ENCODE measurements at regions of chr17 and their contacts with region 1.

Region 1: GRCh38 chr17:47970704-47971463 is at the start of gene CDK5RAP3:
- DNase-seq: peak; percentile 97 to 99 (median 99)
- ATAC-seq: peak; percentile 98
- H3K4me3 ChIP-seq: peak within 1 kb of the TSS; percentile 77 to 99
- H3K4me3 Mint-ChIP-seq: peak within 1 kb of the TSS; percentile 98
- H3K27ac ChIP-seq: peak within 1 kb of the TSS; percentile 40 to 84
- H3K27ac Mint-ChIP-seq: peak within 1 kb of the TSS; percentile 89
- H3K4me1 ChIP-seq: peaks cover 19% of the 10 kb centered on the region
- H3K4me1 Mint-ChIP-seq: peaks cover 34% of the 10 kb centered on the region
- H3K27me3 ChIP-seq: no peaks in the 10 kb centered on the region
- H3K27me3 Mint-ChIP-seq: no peaks in the 10 kb centered on the region
- CTCF ChIP-seq: peak; percentile 97
- total RNA-seq, gene CDK5RAP3: 220 to 231 TPM

Region 2: DNA sequence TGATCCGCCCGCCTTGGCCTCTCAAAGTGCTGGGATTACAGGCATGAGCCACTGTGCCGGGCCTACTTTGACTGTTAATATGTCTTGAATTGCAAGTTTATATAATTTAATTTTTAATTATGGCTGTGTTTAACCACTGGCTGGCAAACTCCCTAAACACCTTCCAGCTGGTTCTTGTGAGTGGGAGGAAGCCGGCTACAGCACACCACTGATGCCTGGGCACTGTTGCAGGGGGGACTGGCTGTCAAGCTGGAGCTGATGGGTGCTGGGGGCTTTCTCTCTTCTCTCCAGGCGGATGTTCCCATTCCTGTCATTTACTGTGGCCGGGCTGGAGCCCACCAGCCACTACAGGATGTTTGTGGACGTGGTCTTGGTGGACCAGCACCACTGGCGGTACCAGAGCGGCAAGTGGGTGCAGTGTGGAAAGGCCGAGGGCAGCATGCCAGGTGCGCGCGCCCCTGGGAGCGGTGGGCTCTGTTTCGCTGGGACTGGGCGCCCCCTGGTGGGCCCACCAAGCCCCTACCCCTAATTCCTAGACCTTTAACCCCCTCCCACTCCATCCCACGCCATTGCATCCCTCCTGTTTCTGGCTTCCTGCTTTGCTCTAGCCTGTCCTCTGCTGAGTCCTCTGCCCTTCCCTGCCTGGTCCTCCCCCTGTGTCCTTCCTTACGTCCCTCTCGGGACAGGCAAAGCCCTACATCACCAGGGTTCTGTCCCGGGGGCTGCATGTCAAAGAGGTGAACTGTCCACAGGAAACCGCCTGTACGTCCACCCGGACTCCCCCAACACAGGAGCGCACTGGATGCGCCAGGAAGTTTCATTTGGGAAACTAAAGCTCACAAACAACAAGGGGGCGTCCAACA is 228.3 kb before region 1 on chr17:
- CTCF ChIA-PET with region 1: no interaction called
- POLR2A ChIA-PET with region 1: no interaction called
- intact Hi-C with region 1: no loop called
- DNase-seq: peak in 6 of 9 experiments; percentile 52 to 75 (median 62)
- ATAC-seq: peak; percentile 59
- H3K4me3 ChIP-seq: peak overlapping the region in 1 of 2 experiments; percentile 1
- H3K4me3 Mint-ChIP-seq: peak overlapping the region; percentile 11
- H3K27ac ChIP-seq: peak overlapping the region in 1 of 2 experiments; percentile 68
- H3K27ac Mint-ChIP-seq: peak overlapping the region; percentile 79
- H3K4me1 ChIP-seq: peaks cover 15% of the 10 kb centered on the region
- H3K4me1 Mint-ChIP-seq: peaks cover 26% of the 10 kb centered on the region
- H3K27me3 ChIP-seq: no peaks in the 10 kb centered on the region
- H3K27me3 Mint-ChIP-seq: no peaks in the 10 kb centered on the region
- CTCF ChIP-seq: peak; percentile 43

Region 3: DNA sequence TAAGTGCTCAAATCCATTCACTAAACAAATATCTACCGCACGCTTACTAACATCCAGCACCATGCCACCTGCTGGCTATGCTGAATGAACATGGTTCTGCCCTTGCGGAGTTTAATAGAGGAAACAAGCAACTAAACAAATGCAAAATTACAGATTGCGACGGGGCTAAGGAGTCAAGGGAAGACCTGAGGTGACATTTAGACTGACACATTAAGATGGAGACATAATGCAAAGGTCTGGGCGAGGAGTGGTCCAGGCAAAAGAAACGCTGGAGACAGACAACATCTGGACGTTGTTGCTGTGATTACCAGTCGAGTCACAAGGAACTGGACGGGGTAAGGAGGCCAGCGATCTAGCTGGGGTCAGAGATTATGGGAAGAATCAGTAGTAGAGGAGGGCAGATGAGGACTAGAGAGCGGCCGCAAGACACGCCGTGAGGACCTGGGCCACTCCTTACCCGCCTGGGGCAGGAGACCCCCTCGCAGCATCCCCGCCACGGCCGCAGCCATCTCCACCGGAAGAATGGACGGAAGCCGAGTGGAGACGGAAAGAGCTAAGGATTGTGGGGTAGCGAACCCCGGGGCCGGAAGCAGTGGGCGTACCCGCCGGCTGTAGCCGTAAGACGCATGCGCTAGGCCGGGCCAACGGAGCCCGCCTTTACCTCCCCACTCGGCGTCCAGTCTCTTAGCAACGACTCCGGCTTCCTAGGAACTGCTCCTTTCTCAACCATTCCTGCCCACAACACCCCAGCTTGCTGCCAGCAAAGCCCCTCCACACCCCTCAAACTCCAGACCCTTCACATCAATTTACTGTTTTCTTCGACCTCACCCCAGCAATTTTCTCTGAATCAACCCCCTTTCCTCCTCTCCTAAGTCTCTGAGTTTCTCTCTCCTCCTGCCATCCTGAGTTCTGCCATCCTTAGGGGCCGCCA is 139.6 kb before region 1 on chr17 and contains the starts of genes LRRC46 and MRPL10:
- CTCF ChIA-PET with region 1: no interaction called
- POLR2A ChIA-PET with region 1: no interaction called
- intact Hi-C with region 1: loop called in 1 of 2 experiments (anchors 2 kb)
- DNase-seq: peak; percentile 80 to 96 (median 91)
- ATAC-seq: peak; percentile 71
- H3K4me3 ChIP-seq: peak within 1 kb of the TSS; percentile 87 to 95
- H3K4me3 Mint-ChIP-seq: peak within 1 kb of the TSS; percentile 91
- H3K27ac ChIP-seq: peak within 1 kb of the TSS; percentile 84 to 96
- H3K27ac Mint-ChIP-seq: peak within 1 kb of the TSS; percentile 98
- H3K4me1 ChIP-seq: peaks cover 30% of the 10 kb centered on the region
- H3K4me1 Mint-ChIP-seq: peaks cover 51% of the 10 kb centered on the region
- H3K27me3 ChIP-seq: no peaks in the 10 kb centered on the region
- H3K27me3 Mint-ChIP-seq: no peaks in the 10 kb centered on the region
- CTCF ChIP-seq: peak; percentile 36
- total RNA-seq, gene LRRC46: 0.43 to 1.5 TPM
- total RNA-seq, gene MRPL10: 67.5 to 69.7 TPM

Region 4: GRCh38 chr17:47889734-47890529 is 81.0 kb before region 1 on chr17:
- CTCF ChIA-PET with region 1: interaction called, 23 read pairs
- POLR2A ChIA-PET with region 1: interaction called, 30 read pairs
- intact Hi-C with region 1: no loop called
- DNase-seq: peak; percentile 80 to 97 (median 90)
- ATAC-seq: peak; percentile 99
- H3K4me3 ChIP-seq: no peak overlapping the region
- H3K4me3 Mint-ChIP-seq: no peak overlapping the region
- H3K27ac ChIP-seq: no peak overlapping the region
- H3K27ac Mint-ChIP-seq: no peak overlapping the region
- H3K4me1 ChIP-seq: peaks cover 22% of the 10 kb centered on the region
- H3K4me1 Mint-ChIP-seq: peaks cover 29% of the 10 kb centered on the region
- H3K27me3 ChIP-seq: no peaks in the 10 kb centered on the region
- H3K27me3 Mint-ChIP-seq: no peaks in the 10 kb centered on the region
- CTCF ChIP-seq: peak; percentile 96

Region 5: DNA sequence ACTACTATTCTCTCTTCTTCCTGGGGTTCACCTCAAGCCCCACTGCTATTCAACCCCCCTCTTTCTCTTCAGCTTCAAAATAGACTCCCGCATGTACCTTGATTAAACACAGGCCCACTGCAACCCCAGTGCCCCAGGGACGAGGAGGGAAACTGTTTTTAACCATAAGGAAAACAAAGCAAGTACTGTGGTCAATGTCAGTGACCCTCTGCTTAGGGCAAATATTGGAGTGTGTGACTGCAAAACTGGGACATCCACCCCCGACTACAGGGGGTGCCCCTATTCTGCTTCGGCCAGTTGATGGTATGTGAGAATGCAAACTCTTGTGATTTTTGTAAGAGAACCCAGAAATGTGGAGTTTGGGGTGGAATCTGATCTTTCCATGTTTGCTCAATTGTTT is 39.0 kb before region 1 on chr17:
- CTCF ChIA-PET with region 1: no interaction called
- POLR2A ChIA-PET with region 1: no interaction called
- intact Hi-C with region 1: no loop called
- DNase-seq: no peak
- ATAC-seq: no peak
- H3K4me3 ChIP-seq: no peak overlapping the region
- H3K4me3 Mint-ChIP-seq: no peak overlapping the region
- H3K27ac ChIP-seq: no peak overlapping the region
- H3K27ac Mint-ChIP-seq: peak overlapping the region; percentile 32
- H3K4me1 ChIP-seq: no peaks in the 10 kb centered on the region
- H3K4me1 Mint-ChIP-seq: no peaks in the 10 kb centered on the region
- H3K27me3 ChIP-seq: no peaks in the 10 kb centered on the region
- H3K27me3 Mint-ChIP-seq: no peaks in the 10 kb centered on the region
- CTCF ChIP-seq: no peak

Region 6: GRCh38 chr17:47949136-47949759 is 21.6 kb before region 1 on chr17:
- CTCF ChIA-PET with region 1: interaction called, 421 read pairs
- POLR2A ChIA-PET with region 1: interaction called, 13 read pairs
- intact Hi-C with region 1: loop called (anchors 1 kb)
- DNase-seq: peak; percentile 47 to 88 (median 79)
- ATAC-seq: peak; percentile 53
- H3K4me3 ChIP-seq: peak overlapping the region; percentile 26 to 36
- H3K4me3 Mint-ChIP-seq: peak overlapping the region; percentile 82
- H3K27ac ChIP-seq: peak overlapping the region in 1 of 2 experiments; percentile 28
- H3K27ac Mint-ChIP-seq: peak overlapping the region; percentile 81
- H3K4me1 ChIP-seq: peaks cover 51% of the 10 kb centered on the region
- H3K4me1 Mint-ChIP-seq: peaks cover 46% of the 10 kb centered on the region
- H3K27me3 ChIP-seq: no peaks in the 10 kb centered on the region
- H3K27me3 Mint-ChIP-seq: no peaks in the 10 kb centered on the region
- CTCF ChIP-seq: peak; percentile 78

Region 7: GRCh38 chr17:48107168-48108132 is 136.6 kb after region 1 on chr17 and contains the start of gene SNX11:
- CTCF ChIA-PET with region 1: no interaction called
- POLR2A ChIA-PET with region 1: interaction called, 3 read pairs
- intact Hi-C with region 1: loop called in 1 of 2 experiments (anchors 1 kb)
- DNase-seq: peak; percentile 80 to 97 (median 92)
- ATAC-seq: peak; percentile 93
- H3K4me3 ChIP-seq: peak within 1 kb of the TSS; percentile 70 to 91
- H3K4me3 Mint-ChIP-seq: peak within 1 kb of the TSS; percentile 98
- H3K27ac ChIP-seq: peak within 1 kb of the TSS; percentile 78 to 82
- H3K27ac Mint-ChIP-seq: peak within 1 kb of the TSS; percentile 88
- H3K4me1 ChIP-seq: peaks cover 37% of the 10 kb centered on the region
- H3K4me1 Mint-ChIP-seq: peaks cover 60% of the 10 kb centered on the region
- H3K27me3 ChIP-seq: no peaks in the 10 kb centered on the region
- H3K27me3 Mint-ChIP-seq: no peaks in the 10 kb centered on the region
- CTCF ChIP-seq: no peak
- total RNA-seq, gene SNX11: 15.3 to 16.3 TPM

Region 8: GRCh38 chr17:49230636-49231562 is 1260.0 kb after region 1 on chr17 and contains the start of gene PHOSPHO1:
- CTCF ChIA-PET with region 1: no interaction called
- POLR2A ChIA-PET with region 1: no interaction called
- intact Hi-C with region 1: loop called in 1 of 2 experiments (anchors 5 kb)
- DNase-seq: peak; percentile 71 to 94 (median 88)
- ATAC-seq: peak; percentile 93
- H3K4me3 ChIP-seq: peak within 1 kb of the TSS; percentile 69 to 91
- H3K4me3 Mint-ChIP-seq: peak within 1 kb of the TSS; percentile 83
- H3K27ac ChIP-seq: no peak within 1 kb of the TSS
- H3K27ac Mint-ChIP-seq: peak within 1 kb of the TSS; percentile 19
- H3K4me1 ChIP-seq: peaks cover 24% of the 10 kb centered on the region
- H3K4me1 Mint-ChIP-seq: peaks cover 14% of the 10 kb centered on the region
- H3K27me3 ChIP-seq: no peaks in the 10 kb centered on the region
- H3K27me3 Mint-ChIP-seq: peaks cover 4% of the 10 kb centered on the region
- CTCF ChIP-seq: no peak
- total RNA-seq, gene PHOSPHO1: not detected

Measured in CD8-positive, alpha-beta T cell (primary cell).